ENCODE measurements at regions of chr3 and their contacts with region 1.

Region 1: DNA sequence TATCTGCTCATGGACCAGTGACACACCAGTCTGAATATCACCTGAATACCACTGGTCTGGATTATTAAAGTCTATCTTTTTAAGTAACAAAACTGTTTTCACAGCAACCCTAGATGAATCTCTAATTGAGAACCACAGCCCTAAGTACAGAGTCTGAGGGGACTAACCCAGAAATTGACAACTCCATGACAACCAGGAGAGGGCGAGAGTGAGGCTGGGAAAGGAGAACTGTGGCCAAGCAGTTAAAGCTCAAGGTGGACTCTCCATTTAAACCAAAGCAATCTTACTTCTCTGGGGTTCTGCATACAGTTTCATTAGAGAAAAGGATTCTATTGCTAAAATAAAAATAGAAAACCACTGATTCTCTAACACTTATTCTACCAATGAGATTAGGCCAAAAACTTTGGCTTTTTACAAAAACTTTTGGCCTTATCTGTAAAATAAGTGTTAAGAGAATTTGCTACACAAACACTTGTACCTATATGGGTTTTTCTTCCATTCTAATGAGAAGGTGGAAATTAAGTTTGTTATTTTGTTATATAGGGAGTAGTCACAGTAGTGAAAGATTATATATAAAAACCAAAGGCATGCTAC is 11.4 kb downstream of the NEK10 start:
- DNase-seq: peak; percentile 47 to 59 (median 53)
- H3K4me3 ChIP-seq: no peak overlapping the region
- H3K4me3 Mint-ChIP-seq: peak overlapping the region in 6 of 8 donors; percentile 14 to 74 (median 30)
- H3K27ac ChIP-seq: no peak overlapping the region
- H3K27ac Mint-ChIP-seq: peak overlapping the region in 1 of 7 donors; percentile 58
- H3K4me1 ChIP-seq: peaks cover 34% of the 10 kb centered on the region
- H3K4me1 Mint-ChIP-seq: peaks cover 28 to 60% (median 40%) of the 10 kb centered on the region in 4 donors
- H3K27me3 ChIP-seq: no peaks in the 10 kb centered on the region
- H3K27me3 Mint-ChIP-seq: no peaks in the 10 kb centered on the region

Region 2: GRCh38 chr3:27368831-27369607 is 11.3 kb after region 1 on chr3 and contains the start of gene NEK10:
- CTCF ChIA-PET with region 1: interaction called, 15 read pairs
- POLR2A ChIA-PET with region 1: interaction called, 6 read pairs
- intact Hi-C with region 1: loop called (anchors 1 kb)
- DNase-seq: peak; percentile 91 to 94 (median 93)
- H3K4me3 ChIP-seq: peak within 1 kb of the TSS; percentile 64 to 81
- H3K4me3 Mint-ChIP-seq: peak within 1 kb of the TSS; percentile 91 to 97 (median 96)
- H3K27ac ChIP-seq: peak within 1 kb of the TSS; percentile 39
- H3K27ac Mint-ChIP-seq: peak within 1 kb of the TSS; percentile 80 to 98 (median 94)
- H3K4me1 ChIP-seq: peaks cover 11% of the 10 kb centered on the region
- H3K4me1 Mint-ChIP-seq: peaks cover 12 to 20% (median 17%) of the 10 kb centered on the region in 4 donors
- H3K27me3 ChIP-seq: no peaks in the 10 kb centered on the region
- H3K27me3 Mint-ChIP-seq: no peaks in the 10 kb centered on the region
- total RNA-seq, gene NEK10: 1.4 to 2.7 TPM

Measured in CD4-positive, alpha-beta memory T cell (primary cell).